Heart right ventricle (tissue), 16 donors: ENCODE measurements at regions of chr1 and their contacts with region 1.

Region 1: DNA sequence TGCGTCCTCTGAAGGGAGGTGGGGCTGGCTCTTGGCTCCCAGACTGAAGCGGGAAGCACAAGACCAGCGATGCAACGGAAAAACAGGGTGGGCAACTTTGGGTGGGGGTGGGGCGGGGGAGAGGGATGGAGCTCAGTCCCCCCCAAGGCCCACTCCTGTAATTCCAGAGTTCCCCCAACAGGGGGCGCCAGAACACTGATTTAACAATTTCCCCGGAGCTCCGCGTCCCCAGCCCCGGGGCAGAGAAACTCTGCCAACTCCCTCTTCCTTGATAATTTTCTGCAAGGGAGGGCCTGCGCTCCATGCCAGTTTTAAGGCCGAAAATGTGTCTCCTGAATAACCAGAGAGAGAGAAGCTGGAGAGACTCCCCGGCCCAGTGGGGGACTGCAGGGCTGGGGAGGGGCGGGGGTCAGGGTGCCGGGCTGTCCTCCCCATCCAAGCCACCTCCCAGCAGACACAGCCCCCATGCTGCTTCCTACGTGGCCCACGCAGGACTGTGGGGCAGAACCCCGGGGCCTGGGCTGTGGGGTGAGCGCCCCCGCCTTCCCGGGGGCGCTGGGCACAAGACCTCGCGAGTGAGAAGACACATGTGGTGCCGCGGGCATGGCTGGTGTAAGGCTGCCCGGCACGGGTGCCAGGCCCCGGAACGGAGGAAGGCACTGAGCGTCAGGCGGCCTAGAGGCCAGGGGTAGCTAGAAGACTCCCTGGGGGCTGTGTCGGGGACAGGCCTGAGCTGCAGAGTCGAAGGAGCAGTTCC is 51.4 kb downstream of the KIF21B start:
- DNase-seq: peak; percentile 60 to 61
- ATAC-seq: peak; percentile 23 to 54 (median 47)
- H3K4me3 ChIP-seq: peak overlapping the region in 1 of 10 donors; percentile 17
- H3K27ac ChIP-seq: no peak overlapping the region
- H3K4me1 ChIP-seq: peaks cover 0 to 9% (median 3%) of the 10 kb centered on the region in 9 donors
- H3K27me3 ChIP-seq: peaks cover 0 to 6% (median 0%) of the 10 kb centered on the region in 7 donors
- CTCF ChIP-seq: peak; percentile 91 to 99 (median 95)

Region 2: DNA sequence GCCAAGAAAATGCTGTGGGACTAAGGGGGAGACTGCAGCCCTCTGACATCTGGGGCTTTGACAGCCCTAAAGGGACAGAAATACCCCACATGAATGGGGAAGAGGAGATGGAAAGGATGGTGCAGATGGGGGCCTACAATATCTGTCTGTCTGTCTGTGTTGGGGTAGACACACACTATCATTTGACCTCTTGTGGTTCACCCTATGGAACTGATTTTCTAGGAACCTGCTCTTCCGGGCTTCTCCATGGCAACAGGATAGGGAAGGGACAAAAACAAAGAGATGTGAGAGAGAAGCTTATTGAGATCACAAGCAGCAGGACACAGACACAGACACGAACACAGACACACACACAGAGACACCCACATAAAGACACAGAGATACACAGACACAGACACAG is 34.3 kb after region 1 on chr1:
- intact Hi-C with region 1: no loop called
- DNase-seq: no peak
- ATAC-seq: no peak
- H3K4me3 ChIP-seq: no peak overlapping the region
- H3K27ac ChIP-seq: no peak overlapping the region
- H3K4me1 ChIP-seq: peaks cover 0 to 4% (median 0%) of the 10 kb centered on the region in 9 donors
- H3K27me3 ChIP-seq: peaks cover 0 to 19% (median 4%) of the 10 kb centered on the region in 7 donors
- CTCF ChIP-seq: no peak

Region 3: DNA sequence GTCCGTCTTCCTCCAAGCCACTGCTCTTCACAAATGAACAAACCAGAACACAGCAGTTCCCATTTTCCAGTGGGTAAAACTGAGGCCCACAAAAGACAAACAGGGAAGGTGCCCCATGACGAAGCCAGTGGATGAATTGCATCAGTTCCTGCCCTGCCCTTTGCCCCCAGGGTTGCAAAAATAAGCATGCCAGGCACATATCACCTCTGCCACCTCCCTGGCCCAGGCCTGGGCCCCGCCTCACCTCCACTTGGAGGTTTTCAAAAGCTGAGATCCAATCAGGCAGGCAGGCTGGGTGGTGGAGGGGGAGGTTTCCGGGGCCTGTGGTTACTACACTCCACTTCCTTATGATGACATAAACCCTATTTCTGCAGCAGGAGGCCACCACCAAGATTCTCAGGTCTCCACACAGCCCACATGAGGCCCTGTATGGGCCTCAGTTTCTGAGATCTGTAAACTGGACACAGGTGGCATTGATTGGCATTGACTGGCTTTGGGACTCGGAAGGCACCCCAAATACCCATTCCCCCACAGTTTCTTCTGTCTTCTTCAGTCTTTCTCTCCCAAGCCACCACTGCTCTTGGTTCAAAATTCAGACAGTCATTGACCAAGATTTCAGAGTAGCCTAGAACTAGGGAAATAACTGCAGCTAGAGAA is 47.3 kb after region 1 on chr1:
- intact Hi-C with region 1: loop called in 1 of 10 experiments (anchors 1 kb)
- DNase-seq: peak in 1 of 2 donors; percentile 39
- ATAC-seq: peak in 7 of 8 donors; percentile 4 to 40 (median 18)
- H3K4me3 ChIP-seq: peak overlapping the region in 1 of 10 donors; percentile 10
- H3K27ac ChIP-seq: peak overlapping the region in 2 of 10 donors; percentile 26 to 90
- H3K4me1 ChIP-seq: peaks cover 8 to 94% (median 36%) of the 10 kb centered on the region in 9 donors
- H3K27me3 ChIP-seq: peaks cover 0 to 44% (median 29%) of the 10 kb centered on the region in 7 donors
- CTCF ChIP-seq: no peak

Region 4: GRCh38 chr1:201042779-201043461 is 70.8 kb after region 1 on chr1:
- intact Hi-C with region 1: loop called (anchors 1 to 5 kb)
- DNase-seq: peak; percentile 38 to 55
- ATAC-seq: peak; percentile 66 to 86 (median 82)
- H3K4me3 ChIP-seq: no peak overlapping the region
- H3K27ac ChIP-seq: no peak overlapping the region
- H3K4me1 ChIP-seq: peaks cover 0 to 9% (median 4%) of the 10 kb centered on the region in 9 donors
- H3K27me3 ChIP-seq: peaks cover 0 to 15% (median 8%) of the 10 kb centered on the region in 7 donors
- CTCF ChIP-seq: peak; percentile 56 to 89 (median 86)

Region 5: GRCh38 chr1:201114236-201115131 is 142.4 kb after region 1 on chr1:
- intact Hi-C with region 1: loop called (anchors 1 to 5 kb)
- DNase-seq: peak; percentile 79 to 82
- ATAC-seq: peak; percentile 88 to 96 (median 93)
- H3K4me3 ChIP-seq: peak overlapping the region; percentile 39 to 65 (median 57)
- H3K27ac ChIP-seq: peak overlapping the region in 1 of 10 donors; percentile 26
- H3K4me1 ChIP-seq: peaks cover 0 to 16% (median 8%) of the 10 kb centered on the region in 9 donors
- H3K27me3 ChIP-seq: peaks cover 0 to 60% (median 46%) of the 10 kb centered on the region in 7 donors
- CTCF ChIP-seq: peak; percentile 62 to 89 (median 80)

Region 6: DNA sequence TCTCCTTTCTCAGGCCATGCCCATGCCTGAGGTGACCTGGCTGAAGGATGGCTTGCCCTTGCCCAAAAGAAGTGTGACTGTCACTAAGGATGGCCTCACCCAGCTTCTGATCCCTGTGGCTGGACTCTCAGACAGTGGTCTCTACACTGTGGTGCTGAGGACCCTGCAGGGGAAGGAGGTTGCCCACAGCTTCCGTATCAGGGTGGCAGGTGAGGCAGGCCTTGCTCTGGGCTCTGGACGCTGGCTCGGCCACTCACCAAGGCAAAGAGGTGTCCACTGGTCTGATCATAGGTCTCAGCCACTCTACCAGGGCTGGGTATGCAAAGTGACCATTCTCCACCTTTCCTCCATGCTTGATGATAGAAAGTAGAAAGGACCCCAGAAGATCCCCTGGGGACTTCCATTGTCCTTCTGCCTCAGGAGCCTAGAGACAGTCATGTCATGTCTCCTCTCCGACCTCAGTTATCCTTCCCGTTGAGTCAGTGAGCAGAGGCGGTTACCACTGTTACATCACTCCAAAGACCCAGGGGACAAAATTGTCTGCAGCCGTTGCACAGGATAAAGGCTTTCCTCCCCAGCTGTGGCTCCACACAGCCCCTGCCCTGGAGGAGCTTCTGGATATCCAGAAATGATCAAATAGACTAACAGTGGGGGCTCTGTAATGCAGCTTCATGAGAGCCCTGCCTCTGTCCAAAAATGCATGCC is 252.7 kb after region 1 on chr1:
- intact Hi-C with region 1: loop called in 6 of 10 experiments (anchors 5 to 10 kb)
- DNase-seq: no peak
- ATAC-seq: no peak
- H3K4me3 ChIP-seq: no peak overlapping the region
- H3K27ac ChIP-seq: no peak overlapping the region
- H3K4me1 ChIP-seq: no peaks in the 10 kb centered on the region
- H3K27me3 ChIP-seq: peaks cover 0 to 13% (median 0%) of the 10 kb centered on the region in 7 donors
- CTCF ChIP-seq: no peak

Region 7: DNA sequence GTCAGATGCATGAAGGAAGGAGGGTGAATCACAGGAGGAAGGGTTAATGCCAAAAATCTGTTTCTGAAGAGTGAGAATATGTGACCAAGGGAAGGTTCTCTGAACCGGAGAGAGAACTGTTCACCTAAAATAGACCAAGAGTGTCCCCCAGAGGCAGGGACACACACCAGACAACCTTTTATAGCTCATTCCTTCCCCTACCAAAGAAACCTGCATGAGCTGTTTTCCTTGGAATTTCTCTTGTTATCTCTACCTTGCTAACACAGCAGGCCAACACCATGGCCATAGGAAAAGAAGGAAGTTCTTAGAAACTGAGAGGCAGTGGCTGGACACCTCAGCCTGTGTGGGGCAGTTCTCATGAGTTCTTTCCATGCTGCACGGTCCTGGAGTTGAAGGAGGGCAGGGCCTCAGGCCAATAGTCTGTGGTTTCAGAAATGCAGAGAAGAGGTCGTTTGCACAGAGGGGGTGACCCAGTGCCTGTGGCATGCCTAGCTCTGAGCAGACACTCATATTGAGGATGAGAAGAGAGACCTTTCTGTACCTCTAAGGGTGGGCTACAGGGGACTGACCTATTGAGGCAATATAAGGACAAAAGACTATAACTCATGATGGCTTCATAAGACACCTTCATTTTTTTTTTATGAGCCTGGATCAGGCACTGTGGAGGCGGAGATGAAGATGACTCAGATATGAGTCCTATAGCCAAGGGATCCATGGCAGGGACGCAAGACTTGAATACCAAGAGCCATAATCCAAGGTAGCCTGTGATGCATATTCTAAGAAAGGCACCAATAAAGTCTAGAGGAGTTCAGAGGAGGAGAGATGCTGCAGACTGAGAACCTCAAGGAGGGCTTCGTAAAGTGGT is 257.9 kb after region 1 on chr1:
- intact Hi-C with region 1: loop called in 3 of 10 experiments (anchors 5 to 10 kb)
- DNase-seq: no peak
- ATAC-seq: no peak
- H3K4me3 ChIP-seq: no peak overlapping the region
- H3K27ac ChIP-seq: no peak overlapping the region
- H3K4me1 ChIP-seq: no peaks in the 10 kb centered on the region
- H3K27me3 ChIP-seq: peaks cover 0 to 13% (median 0%) of the 10 kb centered on the region in 7 donors
- CTCF ChIP-seq: no peak